Activated CD4-positive, alpha-beta memory T cell treated with anti-CD3 and anti-CD28 coated beads for 36 hours (primary cell): ENCODE measurements at regions of chr5 and their contacts with region 1.

Region 1: DNA sequence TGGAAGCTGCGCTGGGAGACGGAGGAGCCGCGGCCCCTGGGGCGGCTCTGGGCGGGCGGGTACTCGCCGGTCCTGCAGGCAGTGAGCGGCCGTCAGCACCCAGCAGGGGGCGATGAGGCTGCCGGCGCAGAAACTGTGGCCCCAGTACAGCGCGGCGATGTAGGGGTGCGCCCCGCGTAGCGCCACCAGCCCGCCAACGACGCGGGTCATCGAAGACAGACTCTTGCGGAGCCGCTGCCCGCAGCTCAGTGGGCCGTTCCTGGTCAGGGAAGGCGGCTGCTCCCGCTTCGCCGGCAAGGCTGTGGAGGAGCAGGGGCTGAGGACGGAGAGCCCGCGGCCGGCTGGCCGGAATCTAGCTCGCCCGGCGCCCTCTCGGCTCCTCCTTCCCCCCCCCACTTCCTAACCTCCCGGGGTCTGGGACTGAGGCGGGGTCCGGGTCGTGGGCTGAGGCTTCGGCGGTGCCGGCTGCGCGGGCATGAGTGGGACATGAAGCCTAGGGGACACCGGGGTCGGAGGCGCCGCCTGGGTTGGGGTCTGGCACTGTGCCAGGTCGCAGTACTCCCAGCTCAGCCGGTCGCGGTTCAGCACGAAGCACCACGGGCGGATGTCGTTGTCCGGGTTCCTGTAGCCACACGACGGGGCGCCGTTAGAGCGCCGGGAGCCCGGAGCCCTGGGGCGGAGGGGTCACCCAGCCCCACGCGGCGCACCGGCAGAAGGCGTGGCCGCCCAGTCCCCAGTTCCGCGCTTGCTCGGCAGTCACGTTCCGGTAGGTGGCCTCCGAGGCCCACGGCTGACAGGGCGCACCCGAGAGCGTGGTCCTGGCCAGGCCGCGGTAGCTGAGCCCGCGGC is 3.6 kb upstream of the PFN3 start:
- DNase-seq: peak; percentile 91
- H3K4me3 Mint-ChIP-seq: peak overlapping the region; percentile 75
- H3K27ac Mint-ChIP-seq: no peak overlapping the region
- H3K4me1 Mint-ChIP-seq: peaks cover 22% of the 10 kb centered on the region
- H3K27me3 Mint-ChIP-seq: peaks cover 8% of the 10 kb centered on the region

Region 2: DNA sequence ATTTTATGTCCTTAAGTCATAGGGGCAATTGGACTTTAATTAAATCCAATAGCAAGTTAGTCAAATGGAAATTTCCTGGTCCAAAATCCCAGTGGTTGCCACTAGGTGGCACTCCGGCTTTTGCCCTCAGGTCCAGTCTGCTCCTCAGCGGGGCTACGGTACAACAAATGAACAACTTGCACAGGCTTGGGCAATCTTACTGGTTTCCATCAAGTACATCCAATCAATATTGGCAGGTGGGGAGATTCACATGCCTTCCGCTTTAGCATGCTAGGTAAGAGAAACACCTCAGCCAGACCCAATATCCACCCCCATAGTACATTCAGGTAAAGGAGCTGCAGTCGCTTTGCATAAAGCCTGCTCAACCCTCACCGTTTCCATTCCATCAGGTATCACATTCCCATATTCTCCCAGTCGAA is 86.0 kb before region 1 on chr5:
- CTCF ChIA-PET with region 1: interaction called, 52 read pairs
- POLR2A ChIA-PET with region 1: interaction called, 3 read pairs
- intact Hi-C with region 1: loop called (anchors 1 kb)
- DNase-seq: peak; percentile 86
- H3K4me3 Mint-ChIP-seq: no peak overlapping the region
- H3K27ac Mint-ChIP-seq: no peak overlapping the region
- H3K4me1 Mint-ChIP-seq: peaks cover 15% of the 10 kb centered on the region
- H3K27me3 Mint-ChIP-seq: no peaks in the 10 kb centered on the region

Region 3: GRCh38 chr5:177382423-177383029 is 21.5 kb before region 1 on chr5:
- CTCF ChIA-PET with region 1: interaction called, 20 read pairs
- POLR2A ChIA-PET with region 1: no interaction called
- intact Hi-C with region 1: no loop called
- DNase-seq: peak; percentile 41
- H3K4me3 Mint-ChIP-seq: no peak overlapping the region
- H3K27ac Mint-ChIP-seq: no peak overlapping the region
- H3K4me1 Mint-ChIP-seq: peaks cover 23% of the 10 kb centered on the region
- H3K27me3 Mint-ChIP-seq: no peaks in the 10 kb centered on the region

Region 4: DNA sequence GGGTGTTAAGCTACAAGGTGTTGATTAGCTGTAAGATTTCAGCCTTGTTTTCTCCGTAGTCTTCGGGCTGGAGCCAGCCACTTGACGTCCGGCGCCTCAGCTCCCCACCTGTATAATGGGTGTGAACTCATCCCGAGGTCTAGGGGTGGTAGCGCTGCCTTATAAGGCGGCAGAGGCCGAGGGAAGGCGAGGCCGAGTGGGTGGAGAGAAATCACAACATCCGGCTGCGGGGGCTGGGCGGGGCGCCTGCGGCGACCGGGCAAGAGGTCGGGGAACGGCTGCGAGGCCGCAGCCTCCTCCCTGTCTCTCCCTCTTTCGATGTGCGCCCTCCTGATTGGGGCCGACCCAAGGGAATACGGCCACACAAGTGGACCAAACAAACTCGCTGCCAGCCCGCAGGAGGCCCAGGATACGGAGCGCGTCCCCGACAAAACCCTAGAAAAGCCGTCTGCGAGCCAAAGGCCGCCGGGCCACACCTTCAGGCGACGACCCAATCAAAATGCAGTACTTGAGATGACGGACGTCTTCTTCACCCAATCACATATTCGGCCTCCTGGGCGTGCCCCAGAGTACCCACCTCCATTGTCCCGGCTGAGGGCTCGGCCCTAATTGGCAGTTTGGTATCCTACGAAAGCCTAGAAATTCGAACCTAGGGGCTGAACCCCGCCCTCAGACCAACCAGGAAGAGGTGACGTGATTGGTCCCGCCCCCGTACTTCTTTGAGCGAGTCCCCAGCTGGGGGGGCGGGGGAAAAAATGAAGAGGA is 22.0 kb after region 1 on chr5:
- CTCF ChIA-PET with region 1: interaction called, 220 read pairs
- POLR2A ChIA-PET with region 1: interaction called, 39 read pairs
- intact Hi-C with region 1: loop called (anchors 1 kb)
- DNase-seq: peak; percentile 100
- H3K4me3 Mint-ChIP-seq: peak overlapping the region; percentile 87
- H3K27ac Mint-ChIP-seq: peak overlapping the region; percentile 94
- H3K4me1 Mint-ChIP-seq: peaks cover 35% of the 10 kb centered on the region
- H3K27me3 Mint-ChIP-seq: no peaks in the 10 kb centered on the region

Region 5: GRCh38 chr5:177454397-177455035 is 50.5 kb after region 1 on chr5:
- CTCF ChIA-PET with region 1: interaction called, 624 read pairs
- POLR2A ChIA-PET with region 1: interaction called, 81 read pairs
- intact Hi-C with region 1: loop called (anchors 1 kb)
- DNase-seq: peak; percentile 95
- H3K4me3 Mint-ChIP-seq: peak overlapping the region; percentile 78
- H3K27ac Mint-ChIP-seq: peak overlapping the region; percentile 66
- H3K4me1 Mint-ChIP-seq: peaks cover 11% of the 10 kb centered on the region
- H3K27me3 Mint-ChIP-seq: no peaks in the 10 kb centered on the region

Region 6: GRCh38 chr5:177516604-177517568 is 112.9 kb after region 1 on chr5 and contains the start of gene DDX41:
- CTCF ChIA-PET with region 1: interaction called, 14 read pairs
- POLR2A ChIA-PET with region 1: no interaction called
- intact Hi-C with region 1: no loop called
- DNase-seq: peak; percentile 98
- H3K4me3 Mint-ChIP-seq: peak within 1 kb of the TSS; percentile 88
- H3K27ac Mint-ChIP-seq: peak within 1 kb of the TSS; percentile 83
- H3K4me1 Mint-ChIP-seq: peaks cover 46% of the 10 kb centered on the region
- H3K27me3 Mint-ChIP-seq: no peaks in the 10 kb centered on the region
- total RNA-seq, gene DDX41: 143 to 145 TPM